CD8-positive, alpha-beta memory T cell (primary cell): ENCODE measurements at regions of chr19 and their contacts with region 1.

Region 1: DNA sequence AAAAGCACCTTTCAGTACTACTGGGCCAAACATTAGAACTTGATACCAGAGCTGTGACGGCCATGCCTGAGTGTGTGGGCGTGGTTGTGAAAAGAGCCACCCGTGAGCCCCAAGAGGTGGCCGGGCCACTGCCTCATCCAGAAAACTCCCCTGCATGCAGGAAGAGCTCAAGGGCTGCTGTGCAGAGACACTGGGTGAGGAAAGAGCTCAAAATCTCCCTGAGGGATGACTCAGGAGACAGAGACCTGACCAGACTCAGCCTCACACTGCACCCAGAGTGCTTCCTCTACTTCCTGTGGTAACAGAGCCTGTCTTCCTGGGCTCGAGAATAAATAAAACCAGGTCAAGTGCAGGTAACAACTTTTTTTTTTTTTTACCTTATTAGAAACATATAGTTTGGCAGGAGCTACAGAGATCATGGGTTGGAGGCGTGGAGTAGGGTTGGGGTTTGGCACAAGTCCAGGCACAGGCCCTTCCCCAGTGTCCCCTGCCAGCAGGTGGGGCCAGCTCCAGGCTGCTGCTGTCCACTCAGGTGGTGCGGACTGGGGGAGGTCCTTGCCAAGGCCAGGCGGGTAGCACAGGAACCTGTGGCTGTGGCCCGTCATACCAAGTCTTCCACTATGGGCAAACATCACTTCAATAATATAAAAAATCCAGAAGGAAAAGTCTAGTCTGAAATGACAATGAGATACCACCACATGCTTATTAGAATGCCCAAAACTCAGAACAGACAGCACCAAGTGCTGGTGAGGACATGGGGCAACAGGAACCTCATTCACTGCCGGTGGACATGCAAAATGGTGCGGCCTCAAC is 25.5 kb downstream of the ELL start:
- DNase-seq: peak; percentile 36 to 90 (median 79)
- H3K4me3 ChIP-seq: peak overlapping the region; percentile 57
- H3K4me3 Mint-ChIP-seq: peak overlapping the region; percentile 81 to 93 (median 85)
- H3K27ac ChIP-seq: peak overlapping the region; percentile 87
- H3K27ac Mint-ChIP-seq: peak overlapping the region; percentile 68 to 100 (median 99)
- H3K4me1 ChIP-seq: peaks cover 96% of the 10 kb centered on the region
- H3K4me1 Mint-ChIP-seq: peaks cover 80 to 96% (median 89%) of the 10 kb centered on the region in 3 donors
- H3K27me3 ChIP-seq: no peaks in the 10 kb centered on the region
- H3K27me3 Mint-ChIP-seq: peaks cover 0 to 1% of the 10 kb centered on the region in 2 donors

Region 2: GRCh38 chr19:18013210-18014111 is 482.9 kb before region 1 on chr19:
- CTCF ChIA-PET with region 1: no interaction called
- POLR2A ChIA-PET with region 1: no interaction called
- DNase-seq: no peak
- H3K4me3 ChIP-seq: no peak overlapping the region
- H3K4me3 Mint-ChIP-seq: peak overlapping the region; percentile 51 to 85 (median 71)
- H3K27ac ChIP-seq: no peak overlapping the region
- H3K27ac Mint-ChIP-seq: peak overlapping the region; percentile 71 to 97 (median 91)
- H3K4me1 ChIP-seq: peaks cover 69% of the 10 kb centered on the region
- H3K4me1 Mint-ChIP-seq: peaks cover 29 to 65% (median 48%) of the 10 kb centered on the region in 3 donors
- H3K27me3 ChIP-seq: no peaks in the 10 kb centered on the region
- H3K27me3 Mint-ChIP-seq: no peaks in the 10 kb centered on the region

Region 3: DNA sequence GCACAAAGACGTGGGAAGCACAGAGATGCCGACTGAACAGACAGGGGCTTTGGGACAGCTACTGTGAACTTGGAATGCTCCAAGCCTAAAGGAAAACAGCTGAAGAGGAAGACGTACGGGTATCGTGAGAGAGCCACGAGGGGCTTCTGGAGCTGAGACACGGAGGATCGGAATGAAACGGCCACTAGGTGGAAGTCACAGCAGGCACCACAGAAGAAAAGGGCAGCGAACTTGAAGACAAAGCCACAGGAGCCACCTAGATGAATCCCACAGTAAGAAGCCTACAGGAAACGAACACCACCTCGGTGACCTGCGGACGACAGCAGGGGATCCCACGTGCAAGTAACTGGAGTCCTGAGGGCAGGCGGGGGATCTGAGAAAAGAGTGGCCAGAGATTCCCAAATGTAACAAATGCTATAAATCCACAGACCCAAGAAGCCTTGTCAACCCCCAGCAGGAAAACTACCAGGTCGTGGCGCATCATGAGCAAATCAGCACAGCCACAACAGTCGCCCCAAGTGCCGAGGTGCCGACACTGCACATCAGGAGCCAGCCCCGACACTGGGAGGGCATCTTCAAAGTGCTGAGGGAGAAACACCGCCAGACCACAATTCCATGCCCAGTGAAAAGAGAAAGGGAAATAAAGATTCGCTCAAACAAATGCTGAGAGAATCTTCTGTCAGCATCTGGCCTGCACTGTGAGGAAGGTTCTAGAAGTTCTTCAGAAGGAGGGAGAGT is 19.2 kb before region 1 on chr19:
- CTCF ChIA-PET with region 1: interaction called, 7 read pairs
- POLR2A ChIA-PET with region 1: interaction called, 10 read pairs
- DNase-seq: peak in 1 of 5 donors; percentile 50
- H3K4me3 ChIP-seq: no peak overlapping the region
- H3K4me3 Mint-ChIP-seq: peak overlapping the region; percentile 32 to 80 (median 73)
- H3K27ac ChIP-seq: peak overlapping the region; percentile 6
- H3K27ac Mint-ChIP-seq: peak overlapping the region; percentile 93 to 100 (median 96)
- H3K4me1 ChIP-seq: peaks cover 76% of the 10 kb centered on the region
- H3K4me1 Mint-ChIP-seq: peaks cover 80 to 93% (median 87%) of the 10 kb centered on the region in 3 donors
- H3K27me3 ChIP-seq: no peaks in the 10 kb centered on the region
- H3K27me3 Mint-ChIP-seq: no peaks in the 10 kb centered on the region